HEK293T (cell line): ENCODE measurements at regions of chr14 and their contacts with region 1.

Region 1: GRCh38 chr14:104752735-104753531 is at the start of gene SIVA1:
- DNase-seq: peak; percentile 99

Region 2: GRCh38 chr14:104689109-104689880 is 63.6 kb before region 1 on chr14 and contains the start of gene INF2:
- CTCF ChIA-PET with region 1: no interaction called
- POLR2A ChIA-PET with region 1: interaction called, 12 read pairs
- DNase-seq: peak; percentile 77

Region 3: DNA sequence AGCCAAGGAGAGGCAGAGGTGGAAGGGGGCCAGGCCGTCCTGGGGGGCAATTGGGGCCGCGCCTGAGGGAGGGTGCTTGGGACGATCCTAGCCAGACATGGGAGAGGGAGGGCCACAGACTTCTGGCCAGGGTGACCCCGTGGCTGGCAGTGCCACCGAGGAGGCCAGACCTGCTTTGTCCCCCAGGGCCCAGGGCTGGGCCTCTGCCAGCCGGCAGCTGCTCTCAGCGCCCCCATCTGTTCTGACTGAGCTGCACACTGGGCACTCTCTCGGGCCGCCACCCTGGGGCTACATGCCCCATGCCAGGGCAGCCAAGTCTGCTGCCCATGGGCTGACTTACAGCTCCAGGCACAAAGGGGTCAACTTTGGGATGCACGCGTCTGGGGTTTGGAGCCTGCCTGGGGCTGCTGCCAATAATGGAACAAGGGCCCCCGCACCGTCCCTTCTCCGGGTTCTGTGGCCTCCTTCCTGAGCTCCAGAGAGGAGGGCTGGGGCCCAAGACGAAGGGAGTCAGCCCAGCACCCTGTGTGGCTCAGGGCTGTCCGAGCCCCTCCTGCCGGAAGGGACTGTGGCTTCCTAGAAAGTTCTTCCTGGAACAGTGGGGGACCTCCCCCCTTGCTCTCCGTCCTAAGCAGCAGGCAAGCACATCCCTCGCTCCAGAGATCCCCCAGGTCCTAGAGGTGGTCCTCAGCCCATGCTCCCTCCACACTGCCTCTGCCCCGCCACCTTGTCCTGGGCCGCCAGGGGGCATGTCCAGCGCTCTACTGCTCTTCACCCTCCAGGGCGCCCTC is 27.8 kb before region 1 on chr14:
- CTCF ChIA-PET with region 1: interaction called, 3 read pairs
- POLR2A ChIA-PET with region 1: interaction called, 18 read pairs
- DNase-seq: no peak

Region 4: DNA sequence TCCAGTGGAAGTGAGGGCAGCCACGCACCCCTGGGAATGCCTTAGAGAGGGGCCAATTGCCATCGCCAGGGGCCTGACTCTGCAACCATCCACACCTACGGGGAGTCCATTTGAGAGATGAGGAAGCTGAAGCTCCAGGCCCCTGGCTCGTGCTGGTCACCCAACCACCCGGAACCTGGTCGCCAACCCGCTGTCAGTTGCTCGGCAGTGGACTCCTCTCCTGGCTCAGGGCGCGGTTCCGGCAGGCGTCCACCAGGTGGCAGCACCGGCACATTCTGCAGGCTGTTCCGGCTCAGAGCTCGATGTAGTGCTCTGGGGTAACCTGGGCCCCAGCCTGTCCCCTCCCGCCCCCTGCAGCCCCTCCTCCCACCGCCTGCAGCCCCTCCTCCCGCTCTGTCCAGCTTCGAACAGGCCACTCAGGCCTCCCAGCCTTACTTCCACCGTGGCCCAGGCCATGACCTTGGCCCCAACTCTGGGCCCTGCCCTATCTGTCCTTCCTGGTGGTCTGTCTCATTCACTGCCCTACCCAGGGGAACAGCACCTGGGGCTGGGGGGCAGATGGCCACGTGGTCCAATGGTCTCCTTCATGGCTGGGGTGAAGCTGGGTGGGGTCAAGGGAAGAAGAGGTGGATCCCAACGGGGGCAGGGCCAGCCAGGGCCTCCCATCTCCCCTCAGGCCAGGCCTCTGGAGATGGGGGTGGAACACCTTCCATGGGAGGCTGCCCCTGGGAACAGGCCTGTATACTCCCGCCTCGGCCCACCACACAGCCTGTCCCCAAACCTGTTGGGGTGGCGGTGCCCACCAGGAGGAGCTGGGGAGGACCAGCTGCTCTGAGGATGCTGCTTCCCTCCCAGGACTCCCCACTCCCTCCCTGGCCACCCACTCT is 15.7 kb after region 1 on chr14:
- CTCF ChIA-PET with region 1: interaction called, 15 read pairs
- POLR2A ChIA-PET with region 1: interaction called, 22 read pairs
- DNase-seq: peak; percentile 88

Region 5: DNA sequence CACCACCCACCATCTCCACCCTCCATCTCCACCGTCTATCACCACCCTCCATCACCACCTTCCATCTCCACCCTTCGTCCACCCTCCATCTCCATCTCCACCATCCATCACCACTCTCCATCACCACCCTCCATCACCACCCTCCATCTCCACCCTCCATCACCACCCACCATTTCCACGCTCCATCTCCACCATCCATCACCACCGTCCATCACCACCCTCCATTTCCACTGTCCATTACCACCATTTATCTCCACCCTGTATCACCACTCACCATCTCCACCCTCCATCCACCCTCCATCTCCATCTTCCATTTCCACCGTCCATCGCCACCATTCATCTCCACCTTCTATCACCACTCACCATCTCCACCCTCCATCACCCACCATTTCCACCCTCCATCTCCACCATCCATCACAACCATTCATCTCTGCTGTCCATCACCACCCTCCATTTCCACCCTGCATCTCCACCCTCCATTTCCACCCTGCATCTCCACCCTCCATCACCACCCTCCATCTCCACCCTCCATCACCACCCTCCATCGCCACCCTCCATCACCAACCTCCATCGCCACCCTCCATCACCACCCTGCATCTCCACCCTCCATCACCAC is 106.0 kb after region 1 on chr14:
- CTCF ChIA-PET with region 1: no interaction called
- POLR2A ChIA-PET with region 1: no interaction called
- DNase-seq: no peak